ENCODE measurements at regions of chr2 and their contacts with region 1.

Region 1: GRCh38 chr2:238784671-238785527 is 63.0 kb upstream of the TWIST2 start:
- DNase-seq: peak; percentile 23 to 71 (median 42)
- ATAC-seq: no peak
- H3K4me3 ChIP-seq: no peak overlapping the region
- H3K4me3 Mint-ChIP-seq: no peak overlapping the region
- H3K27ac ChIP-seq: no peak overlapping the region
- H3K27ac Mint-ChIP-seq: no peak overlapping the region
- H3K4me1 ChIP-seq: peaks cover 2% of the 10 kb centered on the region
- H3K4me1 Mint-ChIP-seq: no peaks in the 10 kb centered on the region
- H3K27me3 ChIP-seq: no peaks in the 10 kb centered on the region
- H3K27me3 Mint-ChIP-seq: peaks cover 30% of the 10 kb centered on the region
- CTCF ChIP-seq: peak; percentile 90

Region 2: GRCh38 chr2:238256594-238257104 is 528.2 kb before region 1 on chr2:
- CTCF ChIA-PET with region 1: no interaction called
- POLR2A ChIA-PET with region 1: no interaction called
- intact Hi-C with region 1: loop called in 1 of 2 experiments (anchors 5 kb)
- DNase-seq: peak; percentile 54 to 89 (median 69)
- ATAC-seq: peak; percentile 90
- H3K4me3 ChIP-seq: no peak overlapping the region
- H3K4me3 Mint-ChIP-seq: no peak overlapping the region
- H3K27ac ChIP-seq: no peak overlapping the region
- H3K27ac Mint-ChIP-seq: no peak overlapping the region
- H3K4me1 ChIP-seq: peaks cover 5% of the 10 kb centered on the region
- H3K4me1 Mint-ChIP-seq: no peaks in the 10 kb centered on the region
- H3K27me3 ChIP-seq: no peaks in the 10 kb centered on the region
- H3K27me3 Mint-ChIP-seq: no peaks in the 10 kb centered on the region
- CTCF ChIP-seq: peak; percentile 85

Region 3: GRCh38 chr2:238362626-238363025 is 422.3 kb before region 1 on chr2:
- CTCF ChIA-PET with region 1: interaction called, 3 read pairs
- POLR2A ChIA-PET with region 1: no interaction called
- intact Hi-C with region 1: loop called in 1 of 2 experiments (anchors 5 kb)
- DNase-seq: no peak
- ATAC-seq: no peak
- H3K4me3 ChIP-seq: no peak overlapping the region
- H3K4me3 Mint-ChIP-seq: no peak overlapping the region
- H3K27ac ChIP-seq: no peak overlapping the region
- H3K27ac Mint-ChIP-seq: no peak overlapping the region
- H3K4me1 ChIP-seq: no peaks in the 10 kb centered on the region
- H3K4me1 Mint-ChIP-seq: no peaks in the 10 kb centered on the region
- H3K27me3 ChIP-seq: no peaks in the 10 kb centered on the region
- H3K27me3 Mint-ChIP-seq: no peaks in the 10 kb centered on the region
- CTCF ChIP-seq: no peak

Region 4: DNA sequence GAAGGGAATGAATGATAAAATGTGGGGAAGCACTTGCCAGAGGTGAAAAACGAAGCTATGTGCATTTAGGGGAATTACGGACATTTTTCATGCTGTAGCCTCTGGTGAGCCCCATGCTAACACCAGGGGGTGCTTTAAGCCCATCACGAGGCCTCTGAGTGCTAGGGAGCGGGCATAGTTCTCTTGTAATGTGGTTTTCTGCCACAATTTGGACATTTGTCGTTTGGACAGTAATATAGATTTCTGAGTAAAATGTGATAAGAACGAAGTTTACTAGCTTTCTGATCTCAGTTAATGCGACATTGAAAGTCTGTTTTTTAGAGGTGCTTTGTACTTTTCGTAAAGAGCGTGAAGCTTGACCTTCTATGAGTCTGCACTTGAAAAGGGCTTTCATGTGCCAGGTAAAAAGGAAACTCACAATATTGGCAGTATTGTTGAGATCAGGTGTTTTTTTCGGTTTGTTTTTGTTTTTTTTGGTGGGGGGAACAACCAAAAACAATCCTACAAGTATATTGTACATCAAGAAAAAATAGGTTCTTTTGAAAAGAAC is 414.0 kb before region 1 on chr2:
- CTCF ChIA-PET with region 1: no interaction called
- POLR2A ChIA-PET with region 1: no interaction called
- intact Hi-C with region 1: loop called (anchors 1 kb)
- DNase-seq: peak in 12 of 14 experiments; percentile 18 to 75 (median 41)
- ATAC-seq: peak; percentile 68
- H3K4me3 ChIP-seq: no peak overlapping the region
- H3K4me3 Mint-ChIP-seq: no peak overlapping the region
- H3K27ac ChIP-seq: no peak overlapping the region
- H3K27ac Mint-ChIP-seq: no peak overlapping the region
- H3K4me1 ChIP-seq: no peaks in the 10 kb centered on the region
- H3K4me1 Mint-ChIP-seq: peaks cover 8% of the 10 kb centered on the region
- H3K27me3 ChIP-seq: no peaks in the 10 kb centered on the region
- H3K27me3 Mint-ChIP-seq: no peaks in the 10 kb centered on the region
- CTCF ChIP-seq: peak; percentile 70

Region 5: DNA sequence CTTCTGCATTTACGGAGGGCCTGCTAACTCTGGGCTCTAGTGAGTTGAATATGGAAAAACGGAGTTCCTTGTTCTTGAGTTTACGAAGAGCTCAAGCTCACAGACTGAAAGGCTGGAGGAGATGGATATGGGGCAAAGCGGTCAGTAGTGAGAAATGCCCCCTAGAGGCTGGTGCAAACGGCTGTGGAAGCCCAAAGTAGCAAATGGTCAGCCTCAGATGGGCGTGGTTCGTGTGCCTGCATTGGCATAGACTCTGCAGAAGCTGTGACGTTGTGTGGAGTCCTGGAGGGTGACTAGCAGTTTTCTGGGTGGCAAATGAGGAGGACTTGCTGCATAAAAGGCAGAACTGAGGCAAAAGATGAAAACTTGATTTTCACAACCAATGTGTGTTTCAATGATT is 30.6 kb before region 1 on chr2:
- CTCF ChIA-PET with region 1: interaction called, 3 read pairs
- POLR2A ChIA-PET with region 1: no interaction called
- intact Hi-C with region 1: loop called in 1 of 2 experiments (anchors 1 kb)
- DNase-seq: no peak
- ATAC-seq: no peak
- H3K4me3 ChIP-seq: no peak overlapping the region
- H3K4me3 Mint-ChIP-seq: no peak overlapping the region
- H3K27ac ChIP-seq: no peak overlapping the region
- H3K27ac Mint-ChIP-seq: no peak overlapping the region
- H3K4me1 ChIP-seq: no peaks in the 10 kb centered on the region
- H3K4me1 Mint-ChIP-seq: no peaks in the 10 kb centered on the region
- H3K27me3 ChIP-seq: peaks cover 0 to 2% of the 10 kb centered on the region in 2 experiments
- H3K27me3 Mint-ChIP-seq: peaks cover 24% of the 10 kb centered on the region
- CTCF ChIP-seq: no peak

Region 6: DNA sequence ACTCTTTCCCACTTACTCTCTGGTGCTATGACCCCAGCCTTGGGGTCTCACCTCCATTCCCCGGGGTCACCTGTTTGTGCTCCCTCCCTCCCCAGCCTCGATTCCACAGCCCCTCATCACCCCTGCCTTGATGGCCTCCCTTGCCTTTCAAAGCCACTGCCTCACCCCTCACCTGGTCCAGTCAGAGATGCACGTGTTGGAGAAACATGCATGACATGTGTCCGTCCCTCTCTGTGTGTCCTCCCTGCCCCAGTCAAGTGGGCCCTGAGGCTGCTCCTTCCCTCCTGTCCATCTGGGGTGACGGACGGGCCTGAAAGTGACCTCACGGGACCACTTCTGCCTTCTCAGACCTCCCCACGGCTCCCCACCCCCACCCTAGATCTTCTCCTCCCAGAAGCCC is 19.3 kb before region 1 on chr2:
- CTCF ChIA-PET with region 1: no interaction called
- POLR2A ChIA-PET with region 1: no interaction called
- intact Hi-C with region 1: no loop called
- DNase-seq: no peak
- ATAC-seq: no peak
- H3K4me3 ChIP-seq: no peak overlapping the region
- H3K4me3 Mint-ChIP-seq: no peak overlapping the region
- H3K27ac ChIP-seq: no peak overlapping the region
- H3K27ac Mint-ChIP-seq: no peak overlapping the region
- H3K4me1 ChIP-seq: no peaks in the 10 kb centered on the region
- H3K4me1 Mint-ChIP-seq: no peaks in the 10 kb centered on the region
- H3K27me3 ChIP-seq: peaks cover 11 to 25% of the 10 kb centered on the region in 2 experiments
- H3K27me3 Mint-ChIP-seq: peaks cover 59% of the 10 kb centered on the region
- CTCF ChIP-seq: no peak